Natural killer cell (primary cell): ENCODE measurements at regions of chr1 and their contacts with region 1.

Region 1: GRCh38 chr1:36149237-36149972 is at the start of gene TRAPPC3:
- DNase-seq: peak; percentile 99 to 100
- ATAC-seq: peak; percentile 81 to 97 (median 90)
- H3K4me3 ChIP-seq: peak within 1 kb of the TSS; percentile 78
- H3K4me3 Mint-ChIP-seq: peak within 1 kb of the TSS; percentile 100
- H3K27ac ChIP-seq: peak within 1 kb of the TSS; percentile 92
- H3K27ac Mint-ChIP-seq: peak within 1 kb of the TSS; percentile 99 to 100
- H3K4me1 ChIP-seq: peaks cover 47% of the 10 kb centered on the region
- H3K4me1 Mint-ChIP-seq: peaks cover 52 to 66% of the 10 kb centered on the region in 2 donors
- H3K27me3 ChIP-seq: no peaks in the 10 kb centered on the region
- H3K27me3 Mint-ChIP-seq: no peaks in the 10 kb centered on the region
- CTCF ChIP-seq: peak; percentile 76
- total RNA-seq, gene TRAPPC3: 28.0 to 34.7 (median 34.3) TPM

Region 2: GRCh38 chr1:36088575-36089443 is 60.6 kb before region 1 on chr1 and contains the start of gene ADPRS:
- intact Hi-C with region 1: loop called (anchors 2 kb)
- DNase-seq: peak; percentile 87 to 96
- ATAC-seq: peak; percentile 91 to 98 (median 93)
- H3K4me3 ChIP-seq: peak within 1 kb of the TSS; percentile 79
- H3K4me3 Mint-ChIP-seq: peak within 1 kb of the TSS; percentile 91
- H3K27ac ChIP-seq: peak within 1 kb of the TSS; percentile 82
- H3K27ac Mint-ChIP-seq: peak within 1 kb of the TSS; percentile 82 to 94
- H3K4me1 ChIP-seq: peaks cover 33% of the 10 kb centered on the region
- H3K4me1 Mint-ChIP-seq: peaks cover 17 to 19% of the 10 kb centered on the region in 2 donors
- H3K27me3 ChIP-seq: peaks cover 6% of the 10 kb centered on the region
- H3K27me3 Mint-ChIP-seq: peaks cover 0 to 3% of the 10 kb centered on the region in 2 donors
- CTCF ChIP-seq: peak; percentile 98
- total RNA-seq, gene ADPRS: 9.6 to 15.9 (median 12.4) TPM

Region 3: DNA sequence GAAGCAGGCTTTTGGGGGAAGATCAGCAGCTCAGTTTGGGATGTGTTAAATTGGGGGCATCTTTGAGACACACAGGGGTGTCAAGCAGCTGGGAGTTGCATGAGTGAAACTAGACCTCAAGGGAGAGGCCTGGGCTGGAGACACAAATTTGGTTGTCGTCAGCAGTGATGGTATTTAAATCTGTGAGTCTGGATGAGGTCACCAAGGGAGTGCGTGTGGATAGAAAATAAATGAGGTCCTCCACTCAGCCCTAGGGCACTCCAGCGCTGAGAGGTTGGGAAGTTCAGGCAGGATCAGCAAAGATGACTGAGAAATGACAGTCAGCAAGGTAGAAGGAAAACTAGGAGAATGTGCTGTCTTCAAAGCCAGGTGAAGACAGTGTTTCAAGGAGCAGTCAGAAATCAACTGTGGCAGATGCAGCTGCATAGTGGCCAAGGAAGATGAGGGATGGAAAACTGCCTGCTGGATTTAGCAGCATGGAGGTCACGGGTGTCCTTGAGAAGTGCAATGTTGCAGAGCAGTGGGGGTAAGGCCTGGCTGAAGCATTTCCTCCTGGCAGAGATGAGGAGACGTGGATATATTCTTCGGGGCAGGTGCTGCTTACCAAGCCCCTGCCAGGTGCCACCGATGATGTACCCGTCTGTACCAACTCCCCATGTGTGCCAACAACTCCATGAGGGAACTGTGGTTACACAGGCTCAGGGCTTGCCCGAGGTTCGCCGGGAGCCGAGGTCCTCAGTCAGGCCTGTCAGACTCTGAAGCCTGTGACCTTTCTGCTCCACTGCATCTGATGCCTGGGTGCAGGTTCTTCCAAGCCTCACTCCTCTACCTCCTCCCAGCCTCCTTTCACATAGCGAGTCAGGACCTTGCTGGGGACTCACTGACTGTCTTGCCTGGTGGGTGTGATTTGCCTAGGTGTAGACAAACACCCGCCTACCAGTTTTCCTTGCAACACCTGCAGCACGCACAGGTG is 17.8 kb after region 1 on chr1:
- intact Hi-C with region 1: no loop called
- DNase-seq: no peak
- ATAC-seq: no peak
- H3K4me3 ChIP-seq: no peak overlapping the region
- H3K4me3 Mint-ChIP-seq: peak overlapping the region; percentile 7
- H3K27ac ChIP-seq: no peak overlapping the region
- H3K27ac Mint-ChIP-seq: peak overlapping the region; percentile 59 to 68
- H3K4me1 ChIP-seq: peaks cover 27% of the 10 kb centered on the region
- H3K4me1 Mint-ChIP-seq: peaks cover 49 to 57% of the 10 kb centered on the region in 2 donors
- H3K27me3 ChIP-seq: no peaks in the 10 kb centered on the region
- H3K27me3 Mint-ChIP-seq: no peaks in the 10 kb centered on the region
- CTCF ChIP-seq: no peak

Region 4: DNA sequence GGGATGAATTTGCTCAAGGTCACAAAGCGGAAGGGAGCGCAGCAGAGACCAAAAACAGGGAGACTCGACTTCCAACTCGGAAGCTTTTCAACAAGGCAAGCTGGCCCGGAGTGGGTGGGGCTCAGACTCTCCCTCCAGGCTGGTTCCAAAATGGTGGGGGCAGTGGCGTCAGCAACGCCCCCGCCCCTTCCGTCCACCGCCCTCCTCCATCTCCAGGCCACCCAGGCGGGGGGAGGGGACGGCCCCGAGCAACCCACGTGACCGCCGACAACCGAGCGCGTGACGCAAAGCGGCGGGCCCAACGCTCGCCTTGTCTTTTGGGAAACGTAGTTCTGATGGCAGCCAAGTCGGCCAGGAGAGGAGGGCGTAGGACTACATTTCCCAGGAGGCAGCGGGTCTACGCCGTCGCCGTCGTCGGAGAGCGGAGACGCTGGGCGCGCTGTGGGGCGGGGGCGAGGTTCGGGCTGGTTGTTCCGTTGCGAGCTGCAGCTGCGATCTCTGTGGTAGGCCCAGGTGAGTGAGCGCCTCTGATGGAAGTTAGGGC is 74.7 kb after region 1 on chr1 and contains the start of gene THRAP3:
- intact Hi-C with region 1: loop called (anchors 1 kb)
- DNase-seq: peak; percentile 99 to 100
- ATAC-seq: peak; percentile 83 to 94 (median 84)
- H3K4me3 ChIP-seq: peak within 1 kb of the TSS; percentile 78
- H3K4me3 Mint-ChIP-seq: peak within 1 kb of the TSS; percentile 98
- H3K27ac ChIP-seq: peak within 1 kb of the TSS; percentile 95
- H3K27ac Mint-ChIP-seq: peak within 1 kb of the TSS; percentile 99 to 100
- H3K4me1 ChIP-seq: peaks cover 25% of the 10 kb centered on the region
- H3K4me1 Mint-ChIP-seq: peaks cover 38 to 44% of the 10 kb centered on the region in 2 donors
- H3K27me3 ChIP-seq: no peaks in the 10 kb centered on the region
- H3K27me3 Mint-ChIP-seq: no peaks in the 10 kb centered on the region
- CTCF ChIP-seq: no peak
- total RNA-seq, gene THRAP3: 88.6 to 110 (median 97.4) TPM

Region 5: GRCh38 chr1:36306902-36307456 is 157.6 kb after region 1 on chr1:
- intact Hi-C with region 1: loop called (anchors 2 kb)
- DNase-seq: peak; percentile 89 to 96
- ATAC-seq: peak; percentile 96 to 99 (median 97)
- H3K4me3 ChIP-seq: peak overlapping the region; percentile 48
- H3K4me3 Mint-ChIP-seq: peak overlapping the region; percentile 95
- H3K27ac ChIP-seq: peak overlapping the region; percentile 3
- H3K27ac Mint-ChIP-seq: peak overlapping the region; percentile 62 to 83
- H3K4me1 ChIP-seq: peaks cover 24% of the 10 kb centered on the region
- H3K4me1 Mint-ChIP-seq: peaks cover 14 to 30% of the 10 kb centered on the region in 2 donors
- H3K27me3 ChIP-seq: no peaks in the 10 kb centered on the region
- H3K27me3 Mint-ChIP-seq: no peaks in the 10 kb centered on the region
- CTCF ChIP-seq: no peak

Region 6: DNA sequence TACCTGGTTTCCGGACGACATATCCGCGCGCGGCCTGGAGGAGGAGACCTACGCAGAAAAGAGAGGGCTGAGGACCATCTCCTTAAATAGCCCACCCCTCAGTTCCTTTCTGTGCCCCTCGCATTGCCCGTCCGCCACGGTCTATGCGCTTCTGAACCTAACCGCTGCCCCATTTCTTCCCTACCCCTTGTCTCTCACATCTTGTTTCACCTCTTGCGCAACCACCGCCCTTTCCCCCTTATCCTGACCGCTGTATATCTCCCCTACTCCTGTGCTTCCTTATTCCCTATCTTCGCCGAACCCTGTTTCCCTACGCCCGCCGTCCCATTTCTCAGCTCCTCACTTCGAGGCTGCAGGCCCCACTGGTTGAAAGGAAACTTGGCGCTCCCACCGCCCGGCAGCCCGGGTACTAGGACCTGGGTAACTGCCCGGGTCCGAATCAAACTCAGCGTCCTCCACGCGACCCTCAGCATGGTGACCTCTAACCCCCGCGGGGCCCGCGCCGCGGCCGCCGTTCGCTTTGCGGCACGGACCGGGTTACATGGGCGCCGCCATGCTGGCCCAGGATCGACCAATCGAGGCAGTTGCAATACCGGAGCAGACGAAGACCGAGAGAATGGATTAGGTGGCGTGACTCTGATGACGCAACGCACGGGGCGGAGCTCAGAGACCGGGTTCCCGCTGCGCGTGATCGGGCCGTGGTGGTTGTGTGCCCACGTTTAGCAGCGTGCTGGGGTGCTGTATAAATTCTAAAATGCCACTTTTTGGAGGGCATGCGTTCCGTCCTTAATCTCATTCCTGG is 314.6 kb after region 1 on chr1 and contains the start of gene MRPS15:
- intact Hi-C with region 1: loop called (anchors 1 kb)
- DNase-seq: peak; percentile 96 to 98
- ATAC-seq: peak; percentile 98 to 100 (median 98)
- H3K4me3 ChIP-seq: peak within 1 kb of the TSS; percentile 87
- H3K4me3 Mint-ChIP-seq: peak within 1 kb of the TSS; percentile 99
- H3K27ac ChIP-seq: peak within 1 kb of the TSS; percentile 66
- H3K27ac Mint-ChIP-seq: peak within 1 kb of the TSS; percentile 90 to 96
- H3K4me1 ChIP-seq: peaks cover 13% of the 10 kb centered on the region
- H3K4me1 Mint-ChIP-seq: peaks cover 22 to 27% of the 10 kb centered on the region in 2 donors
- H3K27me3 ChIP-seq: no peaks in the 10 kb centered on the region
- H3K27me3 Mint-ChIP-seq: no peaks in the 10 kb centered on the region
- CTCF ChIP-seq: no peak
- total RNA-seq, gene MRPS15: 28.2 to 38.2 (median 32.0) TPM